Psoas muscle (tissue), 8 donors: ENCODE measurements at regions of chr3 and their contacts with region 1.

Region 1: GRCh38 chr3:184417619-184418327 is 37.9 kb downstream of the CHRD start:
- DNase-seq: peak; percentile 62 to 71
- ATAC-seq: peak; percentile 52 to 76 (median 66)
- H3K4me3 ChIP-seq: no peak overlapping the region
- H3K27ac ChIP-seq: no peak overlapping the region
- H3K4me1 ChIP-seq: no peaks in the 10 kb centered on the region
- H3K27me3 ChIP-seq: no peaks in the 10 kb centered on the region
- CTCF ChIP-seq: peak; percentile 65

Region 2: DNA sequence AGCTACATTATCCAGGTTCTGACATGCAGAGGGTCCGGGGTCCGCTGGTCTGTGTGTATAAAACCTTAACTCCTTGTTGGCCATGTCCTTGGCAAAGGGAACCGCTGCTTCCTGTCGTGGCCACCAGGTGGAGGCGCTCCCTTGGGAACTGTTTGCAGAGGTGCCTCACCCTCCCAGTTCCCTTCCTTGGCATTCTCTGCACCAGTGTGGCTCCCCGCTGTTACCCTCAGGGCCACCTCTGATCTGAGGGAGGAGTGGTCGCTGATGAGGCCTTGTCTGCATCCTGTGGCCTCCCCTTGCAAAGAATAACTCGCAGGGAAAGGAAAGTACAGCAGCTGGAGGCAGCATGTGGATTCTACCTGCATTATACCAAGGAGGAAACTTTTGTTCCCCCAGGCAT is 51.6 kb after region 1 on chr3:
- intact Hi-C with region 1: loop called in 1 of 2 experiments (anchors 5 kb)
- DNase-seq: no peak
- ATAC-seq: peak in 1 of 4 donors; percentile 21
- H3K4me3 ChIP-seq: no peak overlapping the region
- H3K27ac ChIP-seq: no peak overlapping the region
- H3K4me1 ChIP-seq: peaks cover 4% of the 10 kb centered on the region
- H3K27me3 ChIP-seq: peaks cover 0 to 9% (median 0%) of the 10 kb centered on the region in 3 donors
- CTCF ChIP-seq: peak; percentile 37

Region 3: GRCh38 chr3:184513276-184514170 is 95.8 kb after region 1 on chr3:
- intact Hi-C with region 1: loop called in 1 of 2 experiments (anchors 5 kb)
- DNase-seq: peak; percentile 82 to 90
- ATAC-seq: peak; percentile 97 to 100 (median 98)
- H3K4me3 ChIP-seq: peak overlapping the region; percentile 62
- H3K27ac ChIP-seq: no peak overlapping the region
- H3K4me1 ChIP-seq: no peaks in the 10 kb centered on the region
- H3K27me3 ChIP-seq: peaks cover 3 to 29% (median 8%) of the 10 kb centered on the region in 3 donors
- CTCF ChIP-seq: peak; percentile 79

Region 4: GRCh38 chr3:184604039-184604601 is 186.3 kb after region 1 on chr3:
- intact Hi-C with region 1: no loop called
- DNase-seq: peak in 1 of 2 donors; percentile 61
- ATAC-seq: peak; percentile 30 to 60 (median 50)
- H3K4me3 ChIP-seq: peak overlapping the region; percentile 60
- H3K27ac ChIP-seq: no peak overlapping the region
- H3K4me1 ChIP-seq: peaks cover 21% of the 10 kb centered on the region
- H3K27me3 ChIP-seq: peaks cover 0 to 42% (median 26%) of the 10 kb centered on the region in 3 donors
- CTCF ChIP-seq: no peak